ENCODE measurements at regions of chr6 and their contacts with region 1.

Region 1: DNA sequence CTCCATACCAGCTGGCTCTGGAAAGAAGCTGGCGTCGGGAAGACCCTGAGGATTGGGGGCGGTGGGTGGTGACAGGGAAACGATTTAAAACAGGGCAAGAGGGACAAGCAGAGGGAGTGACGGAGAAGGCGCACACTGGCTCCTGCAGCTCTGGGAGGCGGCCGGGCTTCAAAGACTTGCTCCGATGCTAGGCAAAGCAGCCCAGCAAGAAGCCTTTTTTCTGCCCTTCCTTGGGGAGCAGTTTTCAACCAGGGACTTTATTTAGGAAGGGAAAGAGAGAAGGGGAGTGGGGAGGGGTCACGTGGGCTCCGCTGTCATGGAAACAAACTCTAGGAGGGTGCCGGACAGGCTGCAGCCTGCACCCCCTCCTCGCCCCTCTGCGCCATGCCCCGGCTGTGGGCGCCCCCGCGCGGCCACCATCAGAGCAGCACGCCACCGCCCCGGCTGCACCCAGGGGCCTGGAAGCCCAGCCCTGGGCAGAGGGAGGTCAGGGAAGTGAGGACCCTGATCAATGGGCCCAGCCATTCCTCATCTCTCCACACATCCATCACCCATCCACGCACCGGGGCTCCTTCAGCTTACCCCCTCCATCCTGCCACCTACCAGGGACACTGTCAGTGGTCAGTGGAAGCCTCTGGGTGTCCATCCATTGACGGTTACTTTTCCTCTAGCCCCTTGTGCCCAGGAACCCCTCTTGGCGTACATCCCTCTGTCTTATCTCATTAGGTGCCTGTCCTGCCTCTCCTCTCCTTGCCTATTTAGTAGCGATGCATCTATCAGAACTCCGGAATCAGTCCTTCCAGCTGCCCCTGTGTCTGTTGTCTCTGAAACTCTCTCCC is 66.6 kb upstream of the CCDC167 start:
- DNase-seq: peak; percentile 75
- ATAC-seq: peak; percentile 94

Region 2: GRCh38 chr6:37381579-37381978 is 184.8 kb before region 1 on chr6:
- intact Hi-C with region 1: loop called (anchors 5 kb)
- DNase-seq: no peak
- ATAC-seq: peak; percentile 59

Region 3: DNA sequence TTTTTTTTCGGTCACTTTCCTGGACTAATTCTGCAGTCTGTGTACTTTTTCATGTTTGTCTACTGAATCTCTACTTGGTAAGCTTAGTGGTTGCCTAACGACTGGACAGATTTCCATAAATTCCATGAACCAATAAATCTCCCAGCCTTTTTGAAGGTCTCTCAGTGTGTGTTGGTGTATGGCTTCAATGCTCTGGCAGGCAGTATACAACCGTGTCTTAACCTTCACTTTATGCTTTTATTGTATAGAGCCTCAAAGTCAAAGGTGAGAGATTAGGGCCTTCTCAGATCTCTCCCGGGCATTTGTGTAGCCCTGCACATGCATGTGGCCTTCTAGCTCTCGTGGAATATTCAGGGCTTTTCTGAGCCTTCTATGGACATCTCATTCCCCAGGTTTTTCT is 147.6 kb before region 1 on chr6:
- intact Hi-C with region 1: no loop called
- DNase-seq: no peak
- ATAC-seq: no peak

Region 4: GRCh38 chr6:37489660-37490361 is 76.5 kb before region 1 on chr6:
- intact Hi-C with region 1: loop called (anchors 5 kb)
- DNase-seq: peak; percentile 56
- ATAC-seq: peak; percentile 65

Region 5: GRCh38 chr6:37987018-37987417 is 420.7 kb after region 1 on chr6:
- intact Hi-C with region 1: no loop called
- DNase-seq: no peak
- ATAC-seq: no peak